AG04449 (cell line): ENCODE measurements at regions of chr3 and their contacts with region 1.

Region 1: DNA sequence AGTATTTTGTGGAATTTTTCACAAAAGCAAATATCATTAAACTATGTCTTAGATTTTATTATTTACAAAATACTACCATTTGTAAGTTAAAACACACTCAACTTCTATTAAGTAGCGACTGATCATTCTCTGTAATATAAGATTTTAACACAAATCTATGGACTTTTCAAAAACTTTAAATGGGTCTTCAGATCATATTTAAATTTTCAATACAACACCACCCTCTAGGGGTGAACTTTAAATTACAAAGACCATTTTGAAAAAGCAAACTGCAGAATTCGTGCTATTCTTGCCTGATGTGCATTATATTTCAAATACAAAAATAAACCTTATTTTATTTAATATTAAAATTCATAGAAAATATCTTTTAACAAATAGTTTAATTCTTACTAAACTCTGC is 8.2 kb upstream of the VGLL4 start:
- DNase-seq: no peak
- H3K4me3 ChIP-seq: no peak overlapping the region
- CTCF ChIP-seq: peak; percentile 0

Region 2: GRCh38 chr3:11392014-11392859 is 259.7 kb before region 1 on chr3:
- CTCF ChIA-PET with region 1: interaction called, 10 read pairs
- POLR2A ChIA-PET with region 1: no interaction called
- DNase-seq: peak; percentile 56
- H3K4me3 ChIP-seq: no peak overlapping the region
- CTCF ChIP-seq: no peak

Region 3: GRCh38 chr3:11558002-11558401 is 93.9 kb before region 1 on chr3:
- CTCF ChIA-PET with region 1: interaction called, 11 read pairs
- POLR2A ChIA-PET with region 1: interaction called, 4 read pairs
- DNase-seq: no peak
- H3K4me3 ChIP-seq: no peak overlapping the region
- CTCF ChIP-seq: no peak

Region 4: DNA sequence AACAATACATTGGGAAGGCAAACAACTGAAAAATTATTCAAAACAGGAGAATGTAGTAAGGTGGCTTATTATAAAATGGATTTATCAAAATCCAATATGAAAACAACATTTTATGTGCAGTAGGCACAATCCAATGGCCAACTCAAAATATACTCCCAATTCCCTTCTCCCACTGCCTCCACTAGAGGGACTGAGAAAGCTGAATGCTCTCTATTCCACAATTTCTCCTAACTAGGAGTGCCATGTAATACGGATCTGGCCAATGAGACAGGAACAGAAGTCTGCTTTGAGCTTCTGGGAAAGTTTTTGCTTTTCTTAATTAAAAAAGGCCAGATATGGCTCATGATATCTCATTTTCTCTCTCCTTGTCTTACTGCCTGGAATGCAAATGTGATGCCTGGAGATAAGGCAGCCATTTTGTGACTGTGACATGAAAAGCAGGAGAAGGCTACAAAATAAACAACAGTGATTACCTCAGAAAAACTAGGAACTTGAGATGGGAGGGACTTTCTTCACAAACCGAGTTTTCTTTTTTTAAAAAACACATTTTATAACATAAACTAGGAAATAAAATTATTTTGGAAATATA is 10.6 kb after region 1 on chr3:
- CTCF ChIA-PET with region 1: interaction called, 26 read pairs
- POLR2A ChIA-PET with region 1: no interaction called
- DNase-seq: no peak
- H3K4me3 ChIP-seq: no peak overlapping the region
- CTCF ChIP-seq: peak; percentile 32

Region 5: GRCh38 chr3:11735638-11736037 is 83.7 kb after region 1 on chr3:
- CTCF ChIA-PET with region 1: no interaction called
- POLR2A ChIA-PET with region 1: no interaction called
- DNase-seq: no peak
- H3K4me3 ChIP-seq: no peak overlapping the region
- CTCF ChIP-seq: no peak